Transverse colon (tissue), 4 donors: ENCODE measurements at regions of chr6 and their contacts with region 1.

Region 1: GRCh38 chr6:73675466-73676098 is 20.4 kb upstream of the CD109 start:
- DNase-seq: peak; percentile 77
- H3K4me3 ChIP-seq: no peak overlapping the region
- H3K27ac ChIP-seq: no peak overlapping the region
- H3K4me1 ChIP-seq: no peaks in the 10 kb centered on the region
- H3K27me3 ChIP-seq: no peaks in the 10 kb centered on the region
- CTCF ChIP-seq: peak; percentile 80 to 91 (median 85)
- EP300 ChIP-seq: no peak
- POLR2A ChIP-seq: no peak

Region 2: GRCh38 chr6:73604020-73604419 is 71.6 kb before region 1 on chr6:
- in situ Hi-C with region 1: no loop called
- intact Hi-C with region 1: no loop called
- DNase-seq: no peak
- H3K4me3 ChIP-seq: no peak overlapping the region
- H3K27ac ChIP-seq: no peak overlapping the region
- H3K4me1 ChIP-seq: peaks cover 0 to 5% (median 0%) of the 10 kb centered on the region in 4 donors
- H3K27me3 ChIP-seq: no peaks in the 10 kb centered on the region
- CTCF ChIP-seq: no peak
- EP300 ChIP-seq: no peak
- POLR2A ChIP-seq: no peak

Region 3: DNA sequence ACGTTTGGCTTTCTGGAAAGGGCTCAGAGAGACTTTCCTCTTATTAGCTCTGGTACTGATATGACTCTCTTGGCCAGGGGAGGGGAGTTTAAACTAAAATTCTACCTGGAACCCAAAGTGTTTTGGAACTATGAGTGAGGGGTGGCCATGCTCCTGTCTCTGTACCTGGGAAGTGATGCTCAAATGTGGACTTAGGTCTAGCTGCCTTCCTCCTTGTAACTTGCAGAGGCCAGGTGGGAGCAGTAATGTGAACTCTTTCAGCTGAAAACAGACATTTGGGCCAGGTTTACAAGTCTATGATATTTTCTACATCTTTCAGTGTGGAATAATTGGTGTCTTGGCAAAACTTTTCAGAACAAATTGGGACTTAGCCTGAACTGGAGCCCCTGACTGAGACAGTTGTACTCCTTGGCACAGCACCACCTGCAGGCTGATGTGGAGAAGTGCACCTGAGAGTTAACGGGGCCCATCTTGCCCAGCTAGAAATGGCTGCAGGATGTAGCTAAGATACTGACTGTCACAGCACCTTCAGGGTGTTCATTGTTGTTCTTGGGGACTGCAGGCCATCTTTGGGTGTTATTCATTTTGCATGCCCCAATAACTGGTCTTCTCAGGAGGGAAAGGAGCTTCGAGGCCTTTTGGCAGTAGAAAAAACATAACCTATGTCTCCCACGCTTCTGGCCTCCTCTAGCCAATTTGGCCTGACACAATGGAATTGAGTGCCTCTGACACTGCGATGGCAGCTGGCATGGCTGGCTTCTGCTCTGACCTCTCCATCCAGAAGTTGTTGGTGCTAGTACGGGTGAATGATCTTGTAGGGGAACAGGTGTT is 57.5 kb after region 1 on chr6:
- in situ Hi-C with region 1: loop called (anchors 5 to 10 kb)
- intact Hi-C with region 1: loop called (anchors 5 kb)
- DNase-seq: peak; percentile 62
- H3K4me3 ChIP-seq: no peak overlapping the region
- H3K27ac ChIP-seq: no peak overlapping the region
- H3K4me1 ChIP-seq: peaks cover 0 to 7% (median 0%) of the 10 kb centered on the region in 4 donors
- H3K27me3 ChIP-seq: no peaks in the 10 kb centered on the region
- CTCF ChIP-seq: peak; percentile 79 to 92 (median 88)
- EP300 ChIP-seq: no peak
- POLR2A ChIP-seq: no peak

Region 4: GRCh38 chr6:75217193-75217592 is 1541.6 kb after region 1 on chr6:
- in situ Hi-C with region 1: no loop called
- intact Hi-C with region 1: loop called (anchors 5 kb)
- DNase-seq: no peak
- H3K4me3 ChIP-seq: no peak overlapping the region
- H3K27ac ChIP-seq: peak overlapping the region in 2 of 4 donors; percentile 11 to 16
- H3K4me1 ChIP-seq: peaks cover 0 to 32% (median 3%) of the 10 kb centered on the region in 4 donors
- H3K27me3 ChIP-seq: no peaks in the 10 kb centered on the region
- CTCF ChIP-seq: no peak
- EP300 ChIP-seq: no peak
- POLR2A ChIP-seq: no peak